ENCODE measurements at regions of chr16 and their contacts with region 1.

Region 1: GRCh38 chr16:85245307-85246172 is 133.3 kb upstream of the CIBAR2 start:
- DNase-seq: peak; percentile 69
- ATAC-seq: peak; percentile 72 to 89
- H3K4me3 ChIP-seq: no peak overlapping the region
- H3K27ac ChIP-seq: no peak overlapping the region
- H3K4me1 ChIP-seq: no peaks in the 10 kb centered on the region
- CTCF ChIP-seq: peak; percentile 73
- EP300 ChIP-seq: no peak
- POLR2A ChIP-seq: no peak
- RAD21 ChIP-seq: peak; percentile 59 to 67

Region 2: GRCh38 chr16:85037050-85037410 is 208.5 kb before region 1 on chr16:
- CTCF ChIA-PET with region 1: no interaction called
- POLR2A ChIA-PET with region 1: no interaction called
- DNase-seq: peak in 1 of 2 experiments; percentile 49
- ATAC-seq: peak; percentile 46 to 51; a peak in 4 of 6 replicates
- H3K4me3 ChIP-seq: no peak overlapping the region
- H3K27ac ChIP-seq: no peak overlapping the region
- H3K4me1 ChIP-seq: peaks cover 11% of the 10 kb centered on the region; the same call in 2 of the 3 replicates
- CTCF ChIP-seq: no peak
- EP300 ChIP-seq: no peak
- POLR2A ChIP-seq: no peak
- RAD21 ChIP-seq: no peak

Region 3: GRCh38 chr16:85220125-85220839 is 25.3 kb before region 1 on chr16:
- CTCF ChIA-PET with region 1: interaction called, 11 read pairs
- POLR2A ChIA-PET with region 1: no interaction called
- DNase-seq: no peak
- ATAC-seq: peak in 1 of 2 experiments; percentile 33; a peak in 2 of 6 replicates
- H3K4me3 ChIP-seq: no peak overlapping the region
- H3K27ac ChIP-seq: peak overlapping the region in 1 of 2 experiments; percentile 57; a peak in 2 of 6 replicates
- H3K4me1 ChIP-seq: peaks cover 7% of the 10 kb centered on the region; the same call in 1 of the 3 replicates
- CTCF ChIP-seq: no peak
- EP300 ChIP-seq: no peak
- POLR2A ChIP-seq: no peak
- RAD21 ChIP-seq: no peak

Region 4: DNA sequence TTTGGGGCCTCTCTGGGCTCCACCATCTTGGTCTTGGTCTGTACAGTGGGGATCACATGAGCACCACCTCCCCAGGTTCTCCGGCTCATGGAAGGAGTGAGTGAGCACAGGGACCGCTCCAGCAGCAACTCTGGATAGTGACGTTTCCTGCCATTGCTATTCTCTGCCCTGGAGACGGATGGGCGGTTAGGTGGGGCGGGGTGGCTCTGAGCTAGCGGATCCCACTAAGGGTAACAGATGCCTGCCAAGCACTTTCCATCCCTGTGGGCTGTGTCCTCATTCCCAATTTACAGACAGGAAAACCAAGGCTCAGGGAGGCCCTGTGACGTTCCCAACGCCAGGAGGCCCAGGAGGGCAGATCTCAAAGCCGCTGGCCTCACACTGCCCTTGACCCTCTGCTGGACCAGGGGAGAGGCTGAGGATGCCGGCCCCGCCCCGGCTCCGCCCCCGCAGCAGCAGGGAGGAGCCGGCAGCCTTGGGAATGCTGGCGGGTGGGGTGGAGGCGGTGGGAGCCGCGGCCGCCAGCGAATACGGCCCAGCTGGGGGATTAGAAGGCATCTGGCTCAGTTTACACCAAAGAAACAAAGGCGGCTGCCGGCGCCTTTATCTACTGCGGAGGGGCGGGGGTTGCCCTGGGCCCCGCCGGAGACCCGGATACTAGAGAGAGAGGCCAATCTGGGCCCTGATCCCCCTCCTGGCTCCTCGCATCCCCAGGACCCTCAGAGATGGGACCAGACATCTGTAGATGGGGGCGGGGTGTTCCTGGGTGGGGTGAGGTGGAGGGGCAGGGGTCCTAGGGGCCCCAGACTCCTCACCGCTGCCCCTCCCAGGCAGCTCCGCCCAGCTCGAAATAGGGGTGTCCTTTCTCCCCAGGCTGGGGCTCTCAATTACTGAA is 11.0 kb before region 1 on chr16:
- CTCF ChIA-PET with region 1: interaction called, 15 read pairs
- POLR2A ChIA-PET with region 1: no interaction called
- DNase-seq: peak; percentile 37 to 75
- ATAC-seq: peak; percentile 48 to 85; a peak in 4 of 6 replicates
- H3K4me3 ChIP-seq: peak overlapping the region; percentile 42
- H3K27ac ChIP-seq: peak overlapping the region in 1 of 2 experiments; percentile 73; a peak in 3 of 6 replicates
- H3K4me1 ChIP-seq: peaks cover 15% of the 10 kb centered on the region; the same call in 2 of the 3 replicates
- CTCF ChIP-seq: no peak
- EP300 ChIP-seq: no peak
- POLR2A ChIP-seq: no peak
- RAD21 ChIP-seq: no peak

Region 5: GRCh38 chr16:85262558-85263238 is 17.2 kb after region 1 on chr16:
- CTCF ChIA-PET with region 1: interaction called, 155 read pairs
- POLR2A ChIA-PET with region 1: no interaction called
- DNase-seq: no peak
- ATAC-seq: no peak
- H3K4me3 ChIP-seq: no peak overlapping the region
- H3K27ac ChIP-seq: no peak overlapping the region
- H3K4me1 ChIP-seq: no peaks in the 10 kb centered on the region
- CTCF ChIP-seq: no peak
- EP300 ChIP-seq: no peak
- POLR2A ChIP-seq: no peak
- RAD21 ChIP-seq: no peak

Region 6: DNA sequence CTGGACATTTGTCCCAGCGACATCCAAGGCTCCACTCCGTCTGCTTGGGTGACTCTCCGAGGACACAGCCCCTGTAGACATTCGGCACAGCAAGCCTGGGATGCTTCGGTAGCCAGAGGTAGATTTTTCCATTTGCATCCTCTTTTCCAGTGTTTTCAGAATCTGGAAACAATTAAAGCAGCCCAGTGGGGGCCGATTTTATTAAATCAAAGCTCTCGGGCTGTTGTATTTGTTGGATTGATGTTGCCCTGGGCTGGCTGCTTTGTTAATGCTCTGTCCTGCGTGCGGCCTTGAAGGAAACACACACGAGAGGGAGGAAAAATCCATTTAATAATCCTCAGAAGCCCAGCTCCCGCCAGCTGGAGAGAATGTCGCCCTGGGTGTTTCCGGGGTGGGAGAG is 24.8 kb after region 1 on chr16:
- CTCF ChIA-PET with region 1: interaction called, 49 read pairs
- POLR2A ChIA-PET with region 1: no interaction called
- DNase-seq: no peak
- ATAC-seq: no peak
- H3K4me3 ChIP-seq: no peak overlapping the region
- H3K27ac ChIP-seq: no peak overlapping the region
- H3K4me1 ChIP-seq: no peaks in the 10 kb centered on the region
- CTCF ChIP-seq: no peak
- EP300 ChIP-seq: no peak
- POLR2A ChIP-seq: no peak
- RAD21 ChIP-seq: no peak

Region 7: GRCh38 chr16:85554112-85554813 is 308.7 kb after region 1 on chr16:
- CTCF ChIA-PET with region 1: no interaction called
- POLR2A ChIA-PET with region 1: no interaction called
- DNase-seq: peak; percentile 81 to 88
- ATAC-seq: peak; percentile 54 to 72
- H3K4me3 ChIP-seq: peak overlapping the region; percentile 71
- H3K27ac ChIP-seq: peak overlapping the region; percentile 91 to 99
- H3K4me1 ChIP-seq: peaks cover 23% of the 10 kb centered on the region
- CTCF ChIP-seq: no peak
- EP300 ChIP-seq: no peak
- POLR2A ChIP-seq: 0 out of 2 replicates have a peak, but pooled peaks have one; percentile 29
- RAD21 ChIP-seq: no peak

Measured in A549 (cell line).